ENCODE measurements at regions of chr1 and their contacts with region 1.

Region 1: DNA sequence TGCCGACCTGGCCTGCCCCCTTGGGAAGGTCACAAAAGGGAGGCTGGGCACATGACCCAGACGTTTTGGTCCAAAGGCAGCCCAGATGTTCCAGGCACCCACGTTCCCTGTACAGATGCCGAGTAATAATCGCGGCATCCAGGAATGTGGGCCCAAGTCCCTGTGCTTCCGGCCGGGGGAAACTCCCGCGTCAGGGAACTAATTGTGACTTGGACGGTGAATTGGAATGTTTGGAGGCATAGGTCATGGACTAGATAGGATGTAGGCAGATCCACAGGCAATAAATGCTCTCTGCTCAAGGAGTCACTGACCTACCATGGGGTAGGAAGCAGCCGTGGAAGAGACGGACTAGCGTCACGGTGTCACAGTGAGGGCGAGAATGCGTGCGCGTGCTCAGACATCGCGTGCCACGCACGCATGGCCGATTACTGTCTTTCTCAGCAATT is 178.4 kb downstream of the DUSP10 start:
- DNase-seq: peak; percentile 82

Region 2: DNA sequence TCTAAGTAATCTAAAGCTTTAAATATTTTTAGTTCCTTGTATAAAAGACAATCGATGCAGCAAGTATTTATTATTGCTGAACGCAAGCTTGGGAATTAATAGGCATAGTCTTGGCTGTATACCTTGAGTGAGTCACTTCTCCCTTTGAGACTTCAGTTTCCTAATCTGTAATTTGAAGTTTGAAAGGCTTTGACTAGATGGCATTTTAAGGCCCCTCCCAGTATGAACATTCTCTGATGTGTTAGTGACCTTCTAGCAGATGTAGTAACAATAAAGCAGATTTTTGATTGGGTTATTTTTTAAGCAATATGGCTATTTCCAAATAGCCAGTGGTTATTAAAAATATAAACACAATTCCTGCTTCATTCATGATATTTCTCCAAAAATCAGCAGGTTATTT is 120.2 kb after region 1 on chr1:
- intact Hi-C with region 1: loop called in 1 of 2 experiments (anchors 5 kb)
- DNase-seq: no peak